ENCODE measurements at regions of chr4 and their contacts with region 1.

Region 1: GRCh38 chr4:147019061-147019460 is 73.4 kb upstream of the TTC29 start:
- DNase-seq: peak; percentile 77
- H3K4me3 Mint-ChIP-seq: no peak overlapping the region
- H3K27ac Mint-ChIP-seq: no peak overlapping the region
- H3K4me1 Mint-ChIP-seq: no peaks in the 10 kb centered on the region
- H3K27me3 Mint-ChIP-seq: peaks cover 11% of the 10 kb centered on the region

Region 2: DNA sequence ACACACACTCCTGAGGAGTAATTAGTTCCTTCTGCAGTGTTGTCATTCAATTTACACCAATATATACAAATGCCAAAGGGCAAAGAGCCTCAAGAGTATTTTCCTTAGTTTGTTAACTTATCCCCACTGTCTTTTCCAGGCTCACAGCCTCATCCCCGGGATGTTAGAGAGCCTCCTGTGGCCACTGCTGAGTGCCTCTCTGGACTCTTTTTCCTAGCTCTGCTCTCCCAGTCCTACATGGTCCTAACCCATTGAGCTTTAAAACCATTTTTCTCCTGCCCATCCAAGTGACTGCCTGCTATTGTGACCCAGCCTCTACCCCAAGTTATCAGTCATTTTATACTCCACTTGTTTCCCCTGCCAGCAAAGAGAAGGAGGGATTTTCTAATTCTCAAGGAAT is 49.9 kb before region 1 on chr4:
- CTCF ChIA-PET with region 1: no interaction called
- intact Hi-C with region 1: no loop called
- DNase-seq: no peak
- H3K4me3 Mint-ChIP-seq: no peak overlapping the region
- H3K27ac Mint-ChIP-seq: no peak overlapping the region
- H3K4me1 Mint-ChIP-seq: no peaks in the 10 kb centered on the region
- H3K27me3 Mint-ChIP-seq: peaks cover 16% of the 10 kb centered on the region

Region 3: DNA sequence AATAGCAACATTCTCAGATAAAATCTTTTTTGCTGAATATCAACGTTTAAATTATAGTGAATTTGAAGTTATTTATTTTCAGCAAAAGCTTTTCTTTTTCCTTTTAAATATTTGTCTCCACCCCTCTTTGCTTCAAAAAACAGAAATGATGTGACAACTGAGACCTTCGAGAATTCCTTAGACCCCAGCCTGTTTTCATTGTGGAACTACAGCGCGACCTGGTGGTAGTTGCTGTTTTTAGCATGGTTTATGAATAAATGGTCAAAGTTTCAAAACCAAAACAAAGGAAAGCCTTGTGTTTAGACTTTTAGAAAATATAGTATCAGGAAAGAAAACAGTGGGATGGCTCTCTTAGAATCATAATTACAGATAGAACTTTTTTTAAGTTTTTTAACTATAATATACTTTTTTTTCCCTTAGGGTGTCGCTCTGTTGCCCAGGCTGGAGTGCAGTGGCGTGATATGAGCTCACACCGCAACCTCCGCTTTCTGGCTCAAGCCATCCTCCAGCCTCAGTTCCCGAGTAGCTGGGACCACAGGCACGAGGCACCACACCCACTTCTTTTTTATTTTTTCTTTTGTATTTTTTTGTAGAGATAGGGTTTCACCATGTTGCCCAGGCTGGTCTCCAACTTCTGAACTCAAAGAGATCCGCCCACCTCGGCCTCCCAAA is 571.3 kb after region 1 on chr4:
- CTCF ChIA-PET with region 1: interaction called, 5 read pairs
- intact Hi-C with region 1: loop called (anchors 1 kb)
- DNase-seq: peak; percentile 64
- H3K4me3 Mint-ChIP-seq: no peak overlapping the region
- H3K27ac Mint-ChIP-seq: no peak overlapping the region
- H3K4me1 Mint-ChIP-seq: peaks cover 2% of the 10 kb centered on the region
- H3K27me3 Mint-ChIP-seq: no peaks in the 10 kb centered on the region

Measured in activated naive CD4-positive, alpha-beta T cell treated with anti-CD3 and anti-CD28 coated beads for 36 hours (primary cell).